ENCODE measurements at regions of chr18 and their contacts with region 1.

Region 1: DNA sequence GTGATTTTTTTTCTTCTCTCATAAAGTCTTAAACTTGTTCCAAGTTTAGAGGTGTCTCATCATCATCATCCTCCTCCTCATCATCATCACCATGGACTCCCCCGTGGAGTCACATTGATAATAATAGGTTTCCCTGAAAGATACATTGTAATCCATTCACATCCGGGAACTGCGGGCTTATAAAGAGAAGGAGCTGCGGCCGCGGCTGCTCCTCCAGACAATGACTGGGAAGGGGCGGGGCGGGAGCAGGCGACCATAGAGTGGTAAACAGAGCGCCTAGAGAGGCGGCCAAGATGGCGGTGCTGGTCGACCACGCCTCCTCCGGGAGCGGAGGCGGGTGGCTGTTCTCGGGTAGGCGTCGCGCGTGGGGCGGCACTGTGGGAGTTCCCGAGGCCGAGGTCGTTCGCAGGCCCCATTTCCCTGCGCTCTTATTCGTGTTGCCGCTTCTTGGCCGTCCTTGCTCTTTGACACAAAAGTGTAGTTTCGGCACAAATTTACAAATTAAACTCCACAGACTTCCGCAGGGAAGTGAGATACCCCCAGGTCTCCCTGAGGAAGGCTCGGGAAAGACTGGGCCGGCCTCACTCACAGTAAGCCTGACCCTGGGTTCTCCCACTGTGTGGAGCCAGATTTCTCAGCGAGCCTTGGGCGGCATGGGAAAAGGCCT is 1.8 kb upstream of the TCF4 start:
- DNase-seq: peak; percentile 98
- H3K4me3 ChIP-seq: peak overlapping the region; percentile 80
- H3K27ac ChIP-seq: peak overlapping the region; percentile 90
- H3K4me1 ChIP-seq: peaks cover 39% of the 10 kb centered on the region
- H3K27me3 ChIP-seq: no peaks in the 10 kb centered on the region
- CTCF ChIP-seq: no peak

Region 2: DNA sequence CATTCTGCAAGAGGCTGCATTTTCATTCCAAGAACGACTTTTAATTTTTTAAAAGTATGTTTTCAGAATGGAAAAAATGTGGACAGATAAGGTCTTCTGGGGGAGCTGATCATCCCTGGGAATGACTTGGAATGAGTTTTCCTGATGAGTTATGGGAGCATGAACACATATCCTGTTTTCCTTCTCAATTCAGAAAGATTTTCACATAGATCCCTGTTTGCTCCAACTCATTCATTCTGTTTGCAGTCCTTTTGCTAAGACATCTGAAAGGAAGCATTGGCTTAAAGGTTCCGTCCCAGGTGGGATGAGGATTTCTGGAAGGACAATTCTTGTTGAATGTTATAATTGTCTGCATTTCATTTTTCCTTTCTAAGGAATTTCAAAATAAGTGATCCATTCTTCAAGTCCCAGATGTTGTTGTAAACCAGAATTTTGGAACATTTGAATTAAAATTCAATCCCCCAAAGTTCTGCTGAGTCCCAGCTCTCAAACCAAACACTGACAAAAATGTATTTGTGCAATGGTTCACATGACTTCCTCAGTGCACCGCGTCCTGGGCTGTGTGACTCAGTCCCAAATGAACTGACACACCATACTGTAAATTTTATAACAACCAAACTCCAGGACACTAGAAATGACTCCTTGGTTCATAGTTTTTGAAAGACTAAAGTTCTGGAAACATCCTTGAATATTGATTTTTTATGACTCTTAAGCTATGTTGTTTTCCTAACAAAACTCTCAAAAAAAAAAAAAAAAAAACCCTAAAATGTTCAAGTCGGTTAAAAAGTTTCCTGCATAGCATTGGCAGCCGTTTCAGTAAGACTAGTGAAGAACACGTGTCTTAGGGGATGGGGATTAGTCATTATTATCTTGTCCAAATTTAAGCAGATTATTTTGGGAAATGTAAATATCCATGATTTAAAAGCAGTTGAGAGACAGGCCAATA is 280.1 kb after region 1 on chr18:
- intact Hi-C with region 1: loop called (anchors 5 kb)
- DNase-seq: peak; percentile 33
- H3K4me3 ChIP-seq: no peak overlapping the region
- H3K27ac ChIP-seq: peak overlapping the region; percentile 74
- H3K4me1 ChIP-seq: peaks cover 21% of the 10 kb centered on the region
- H3K27me3 ChIP-seq: no peaks in the 10 kb centered on the region
- CTCF ChIP-seq: no peak